ENCODE measurements at regions of chr6 and their contacts with region 1.

Region 1: DNA sequence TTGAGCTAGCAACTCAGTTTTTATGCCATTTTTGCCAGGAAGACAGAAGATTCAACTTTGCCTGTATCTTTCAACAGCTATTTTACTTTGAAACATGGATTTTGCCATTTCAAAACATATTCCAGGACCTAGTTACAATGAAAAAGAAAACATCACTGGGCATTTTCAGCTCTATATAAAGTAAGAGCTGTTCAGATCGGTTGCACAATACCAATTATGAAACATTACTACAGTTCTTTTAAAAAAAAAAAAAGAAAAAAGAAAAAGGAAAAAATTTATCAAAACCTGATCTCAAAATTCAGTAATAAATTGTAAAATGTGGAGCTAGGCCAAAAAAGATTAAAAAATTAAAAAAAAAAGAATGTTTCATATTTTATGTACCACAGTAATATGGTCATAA is 15.6 kb downstream of the BCLAF1 start:
- DNase-seq: no peak
- H3K4me3 Mint-ChIP-seq: no peak overlapping the region
- H3K27ac Mint-ChIP-seq: no peak overlapping the region
- H3K4me1 Mint-ChIP-seq: peaks cover 37% of the 10 kb centered on the region
- H3K27me3 Mint-ChIP-seq: no peaks in the 10 kb centered on the region

Region 2: GRCh38 chr6:136249811-136250685 is 24.0 kb before region 1 on chr6 and contains the start of gene MTFR2:
- intact Hi-C with region 1: loop called (anchors 2 kb)
- DNase-seq: peak; percentile 95
- H3K4me3 Mint-ChIP-seq: peak within 1 kb of the TSS; percentile 98
- H3K27ac Mint-ChIP-seq: peak within 1 kb of the TSS; percentile 92
- H3K4me1 Mint-ChIP-seq: peaks cover 66% of the 10 kb centered on the region
- H3K27me3 Mint-ChIP-seq: no peaks in the 10 kb centered on the region
- total RNA-seq, gene MTFR2: 23.3 and 27.6 TPM in 2 replicates

Region 3: DNA sequence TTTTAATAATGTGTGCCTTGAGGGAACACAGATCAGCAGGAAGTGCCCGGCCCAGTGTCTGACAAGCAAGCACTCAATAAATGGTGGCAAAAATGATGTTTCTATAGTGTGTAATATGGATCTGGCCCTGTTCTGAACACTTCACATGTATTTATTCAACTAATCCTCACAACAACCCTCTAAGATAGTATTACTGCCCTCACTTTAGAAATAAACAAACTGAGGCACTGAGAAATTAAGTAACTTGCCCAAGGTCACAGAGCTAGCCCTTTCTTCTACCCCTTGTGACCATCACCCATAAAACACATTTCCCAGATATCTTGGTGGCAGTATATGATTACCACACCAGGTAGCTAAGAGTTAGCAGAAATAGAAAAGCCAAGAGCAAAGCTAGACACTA is 11.1 kb before region 1 on chr6:
- intact Hi-C with region 1: loop called (anchors 1 kb)
- DNase-seq: no peak
- H3K4me3 Mint-ChIP-seq: no peak overlapping the region
- H3K27ac Mint-ChIP-seq: no peak overlapping the region
- H3K4me1 Mint-ChIP-seq: peaks cover 36% of the 10 kb centered on the region
- H3K27me3 Mint-ChIP-seq: no peaks in the 10 kb centered on the region

Region 4: DNA sequence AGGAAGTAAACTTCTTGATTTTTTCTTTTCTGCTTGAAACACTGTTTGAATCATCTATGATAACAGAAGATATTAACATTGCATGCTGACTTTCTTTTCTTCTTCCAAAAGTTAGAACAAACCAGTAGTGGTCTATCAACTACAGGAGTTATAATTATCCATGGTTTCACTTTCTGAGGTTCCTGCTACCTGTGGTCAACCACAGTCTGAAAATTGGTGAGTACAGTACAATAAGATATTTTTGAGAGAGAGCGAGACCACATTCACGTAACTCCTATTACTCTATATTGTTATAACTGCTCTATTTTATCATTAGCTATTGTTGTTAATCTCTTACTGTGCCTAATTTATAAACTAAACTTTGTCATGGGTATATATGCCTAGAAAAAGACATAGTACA is 190.1 kb after region 1 on chr6:
- intact Hi-C with region 1: no loop called
- DNase-seq: no peak
- H3K4me3 Mint-ChIP-seq: no peak overlapping the region
- H3K27ac Mint-ChIP-seq: no peak overlapping the region
- H3K4me1 Mint-ChIP-seq: peaks cover 7% of the 10 kb centered on the region
- H3K27me3 Mint-ChIP-seq: peaks cover 41% of the 10 kb centered on the region

Region 5: DNA sequence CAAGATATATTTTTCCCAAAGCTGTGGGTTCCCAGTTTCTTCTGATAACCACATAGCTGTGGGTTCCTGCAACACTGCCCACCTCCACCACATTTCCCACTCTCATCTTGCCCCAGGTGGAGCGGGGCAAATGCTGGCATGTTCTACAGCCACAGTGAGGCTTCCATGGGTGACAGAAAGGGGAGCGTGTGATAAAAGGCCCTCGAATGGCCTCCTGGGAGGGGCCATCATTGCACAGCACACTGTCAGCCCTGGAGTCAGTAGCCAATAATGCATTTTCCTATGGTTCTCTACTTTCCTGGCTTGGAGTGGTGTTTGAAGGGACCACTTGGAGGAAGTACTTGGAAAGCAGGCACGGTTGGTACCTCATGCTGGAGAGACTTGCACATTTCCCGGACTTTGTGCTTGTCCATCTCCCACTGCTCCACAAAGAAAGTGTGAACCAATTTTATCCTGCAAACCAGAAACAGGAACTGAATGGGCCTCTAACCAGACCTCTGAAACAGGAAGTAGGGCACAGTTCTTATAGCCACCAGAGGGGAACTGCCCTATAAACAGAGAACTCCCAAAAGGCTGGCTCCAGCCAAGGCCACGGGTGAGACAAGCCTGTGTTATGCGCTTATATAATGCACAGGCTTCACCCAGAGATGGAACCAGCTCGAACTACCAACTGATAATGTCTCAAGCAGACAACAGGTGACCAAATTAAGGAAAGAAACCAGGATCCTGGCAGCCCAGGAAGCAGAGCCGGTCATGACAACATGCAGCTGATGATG is 509.6 kb after region 1 on chr6:
- intact Hi-C with region 1: no loop called
- DNase-seq: no peak
- H3K4me3 Mint-ChIP-seq: peak overlapping the region; percentile 62
- H3K27ac Mint-ChIP-seq: peak overlapping the region; percentile 80
- H3K4me1 Mint-ChIP-seq: peaks cover 84% of the 10 kb centered on the region
- H3K27me3 Mint-ChIP-seq: no peaks in the 10 kb centered on the region

Measured in activated T-helper 1 cell treated with anti-CD3 and anti-CD28 coated beads, Interleukin-12 subunit alpha, Interleukin-12 subunit beta, Interleukin-2, Interleukin-4 antibody, amounts not matched to agents 30 ng/mL and 10 ng/mL and 1 ng/mL, durations not matched to agents 14 hours and 24 hours and 36 hours (primary cell).